ENCODE measurements at regions of chr12 and their contacts with region 1.

Region 1: GRCh38 chr12:25501522-25501921 is 51.6 kb downstream of the LMNTD1 start:
- DNase-seq: no peak
- H3K4me3 ChIP-seq: no peak overlapping the region
- H3K4me3 Mint-ChIP-seq: no peak overlapping the region
- H3K27ac Mint-ChIP-seq: no peak overlapping the region
- H3K4me1 ChIP-seq: peaks cover 7% of the 10 kb centered on the region; the same call in 1 of the 2 replicates
- H3K4me1 Mint-ChIP-seq: peaks cover 19% of the 10 kb centered on the region
- H3K27me3 ChIP-seq: no peaks in the 10 kb centered on the region
- H3K27me3 Mint-ChIP-seq: no peaks in the 10 kb centered on the region
- CTCF ChIP-seq: no peak

Region 2: GRCh38 chr12:25328072-25328712 is 173.3 kb before region 1 on chr12:
- CTCF ChIA-PET with region 1: no interaction called
- POLR2A ChIA-PET with region 1: no interaction called
- intact Hi-C with region 1: no loop called
- DNase-seq: peak in 1 of 2 experiments; percentile 40
- H3K4me3 ChIP-seq: no peak overlapping the region
- H3K4me3 Mint-ChIP-seq: no peak overlapping the region
- H3K27ac Mint-ChIP-seq: no peak overlapping the region
- H3K4me1 ChIP-seq: peaks cover 5% of the 10 kb centered on the region
- H3K4me1 Mint-ChIP-seq: peaks cover 5% of the 10 kb centered on the region
- H3K27me3 ChIP-seq: no peaks in the 10 kb centered on the region
- H3K27me3 Mint-ChIP-seq: no peaks in the 10 kb centered on the region
- CTCF ChIP-seq: no peak

Region 3: DNA sequence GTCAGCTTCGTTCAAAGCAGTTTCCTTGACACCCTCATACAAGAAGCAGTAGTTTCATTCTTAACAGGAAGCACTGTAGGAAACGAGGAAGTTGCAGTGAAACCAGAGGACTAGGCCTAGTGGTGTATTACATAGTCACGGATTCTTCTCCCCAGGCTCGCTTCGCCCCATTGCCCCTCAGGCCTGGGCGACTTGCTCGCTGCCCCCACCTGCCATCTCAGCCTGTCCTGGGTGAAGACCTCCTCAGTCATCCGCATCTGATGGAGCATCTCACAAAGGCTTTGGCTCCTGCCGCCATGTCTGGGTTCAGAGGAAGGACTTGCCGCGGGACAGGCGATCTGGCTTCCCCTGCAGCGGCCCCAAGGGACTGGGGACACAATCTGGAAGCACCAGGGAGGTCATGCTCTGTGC is 42.0 kb before region 1 on chr12:
- CTCF ChIA-PET with region 1: no interaction called
- POLR2A ChIA-PET with region 1: interaction called, 10 read pairs
- intact Hi-C with region 1: no loop called
- DNase-seq: no peak
- H3K4me3 ChIP-seq: no peak overlapping the region
- H3K4me3 Mint-ChIP-seq: no peak overlapping the region
- H3K27ac Mint-ChIP-seq: no peak overlapping the region
- H3K4me1 ChIP-seq: no peaks in the 10 kb centered on the region
- H3K4me1 Mint-ChIP-seq: no peaks in the 10 kb centered on the region
- H3K27me3 ChIP-seq: no peaks in the 10 kb centered on the region
- H3K27me3 Mint-ChIP-seq: no peaks in the 10 kb centered on the region
- CTCF ChIP-seq: no peak

Region 4: DNA sequence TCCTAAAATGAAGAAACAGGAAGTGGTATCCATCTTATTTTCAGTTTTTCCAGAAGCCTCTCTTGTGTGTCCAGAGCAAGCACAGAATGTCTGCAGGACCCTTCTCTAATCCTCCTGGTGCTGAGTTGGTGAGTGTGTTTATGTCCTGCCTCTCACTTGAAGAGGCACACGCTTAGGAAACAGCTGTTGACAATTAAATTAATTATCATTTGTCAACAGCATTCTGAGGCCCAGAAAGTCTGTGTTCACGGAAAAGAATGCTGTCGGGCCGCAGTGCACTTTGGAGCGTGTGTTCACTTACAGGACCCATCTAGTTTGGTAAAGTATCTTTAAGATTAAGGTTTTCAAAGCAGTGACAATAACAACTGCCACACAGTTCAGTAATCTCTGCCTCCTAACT is 18.9 kb before region 1 on chr12:
- CTCF ChIA-PET with region 1: no interaction called
- POLR2A ChIA-PET with region 1: no interaction called
- intact Hi-C with region 1: no loop called
- DNase-seq: no peak
- H3K4me3 ChIP-seq: no peak overlapping the region
- H3K4me3 Mint-ChIP-seq: no peak overlapping the region
- H3K27ac Mint-ChIP-seq: no peak overlapping the region
- H3K4me1 ChIP-seq: no peaks in the 10 kb centered on the region
- H3K4me1 Mint-ChIP-seq: no peaks in the 10 kb centered on the region
- H3K27me3 ChIP-seq: no peaks in the 10 kb centered on the region
- H3K27me3 Mint-ChIP-seq: no peaks in the 10 kb centered on the region
- CTCF ChIP-seq: no peak

Region 5: GRCh38 chr12:25644979-25645378 is 143.5 kb after region 1 on chr12:
- CTCF ChIA-PET with region 1: no interaction called
- POLR2A ChIA-PET with region 1: no interaction called
- intact Hi-C with region 1: no loop called
- DNase-seq: no peak
- H3K4me3 ChIP-seq: no peak overlapping the region
- H3K4me3 Mint-ChIP-seq: no peak overlapping the region
- H3K27ac Mint-ChIP-seq: no peak overlapping the region
- H3K4me1 ChIP-seq: no peaks in the 10 kb centered on the region
- H3K4me1 Mint-ChIP-seq: no peaks in the 10 kb centered on the region
- H3K27me3 ChIP-seq: no peaks in the 10 kb centered on the region
- H3K27me3 Mint-ChIP-seq: no peaks in the 10 kb centered on the region
- CTCF ChIP-seq: no peak

Measured in Caco-2 (cell line).